Posterior vena cava (tissue), 2 donors: ENCODE measurements at regions of chr18 and their contacts with region 1.

Region 1: DNA sequence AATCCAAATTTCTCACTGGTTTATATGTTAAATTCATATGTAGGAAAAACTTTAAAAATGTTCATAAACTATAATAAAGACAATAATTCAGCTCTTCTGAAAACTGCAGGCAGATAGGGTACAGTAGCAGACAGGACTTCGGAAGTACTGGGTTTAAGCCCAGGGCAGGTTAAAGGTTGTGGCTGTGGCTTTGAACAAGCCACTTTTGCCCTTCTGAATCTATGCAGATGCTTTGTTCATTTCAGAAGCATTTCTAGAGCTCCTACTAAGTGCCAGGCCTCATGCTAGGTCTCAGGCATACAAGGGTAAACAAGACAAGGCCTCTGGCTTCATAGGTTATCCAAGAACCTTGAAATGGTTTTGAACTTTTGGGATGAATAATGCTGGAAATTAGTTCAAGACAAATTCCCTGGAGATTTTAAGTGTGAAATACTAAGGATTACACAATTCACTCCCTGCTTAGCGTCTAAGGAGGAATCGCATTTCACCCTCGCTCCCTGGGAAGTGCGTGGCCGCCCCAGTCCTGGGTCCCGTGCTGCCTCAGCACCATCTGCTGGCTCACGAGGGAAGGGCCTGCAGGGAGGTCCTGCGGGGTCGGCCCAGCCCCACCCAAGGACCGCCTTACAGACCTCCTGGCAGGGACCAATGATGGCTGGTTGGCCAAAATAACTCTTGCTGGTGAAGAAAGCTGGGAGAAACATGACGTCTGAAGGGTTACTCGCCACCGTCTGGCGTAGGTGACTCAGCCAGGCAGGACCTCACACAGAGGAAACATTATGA is 67.7 kb upstream of the L3MBTL4 start:
- DNase-seq: peak; percentile 94

Region 2: DNA sequence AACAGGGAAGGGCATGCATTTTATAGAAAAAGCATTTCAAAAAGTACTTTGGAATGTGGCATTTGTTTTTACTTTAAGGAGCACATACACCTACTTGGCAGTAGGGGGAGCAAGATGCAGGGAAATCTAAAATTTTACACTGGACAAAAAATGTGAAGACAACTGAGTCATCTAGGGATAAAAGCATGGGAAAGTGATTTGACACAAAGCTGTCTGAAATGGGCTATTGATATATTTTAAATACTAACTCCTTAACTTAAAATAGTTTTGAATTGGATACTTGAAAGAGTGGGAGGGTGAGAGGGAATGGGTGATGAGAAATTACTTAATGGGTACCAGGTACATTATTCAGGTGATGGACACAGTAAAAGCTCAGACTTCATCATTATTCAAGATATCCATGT is 602.9 kb before region 1 on chr18:
- intact Hi-C with region 1: loop called in 1 of 2 experiments (anchors 5 kb)
- DNase-seq: no peak